Common myeloid progenitor, CD34-positive (primary cell): ENCODE measurements at regions of chr16 and their contacts with region 1.

Region 1: GRCh38 chr16:69754469-69755310 is at the start of gene NOB1:
- DNase-seq: peak; percentile 97 to 99 (median 97)
- H3K4me3 ChIP-seq: peak within 1 kb of the TSS; percentile 70 to 100 (median 99)
- H3K27ac ChIP-seq: peak within 1 kb of the TSS; percentile 69 to 90
- H3K4me1 ChIP-seq: peaks cover 4 to 15% (median 13%) of the 10 kb centered on the region in 4 experiments
- H3K27me3 ChIP-seq: no peaks in the 10 kb centered on the region

Region 2: DNA sequence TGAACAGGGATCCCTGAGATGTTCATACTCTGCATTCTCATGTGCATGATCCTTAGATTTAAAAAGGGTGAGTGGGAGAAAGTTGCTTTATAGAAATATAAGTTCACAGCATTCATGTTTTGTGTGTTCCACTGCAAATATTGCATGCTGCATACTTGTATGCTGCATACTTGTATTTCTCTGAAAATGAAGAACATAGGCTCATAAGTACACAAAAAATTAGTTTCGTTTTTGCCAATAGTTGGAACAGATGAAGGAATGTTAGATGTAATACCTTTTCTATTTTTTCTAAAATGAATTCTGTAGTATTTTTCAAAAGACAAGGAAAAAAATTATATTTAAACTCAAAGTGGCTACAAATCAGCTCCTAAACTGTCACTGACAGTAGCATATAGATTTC is 109.9 kb before region 1 on chr16:
- CTCF ChIA-PET with region 1: no interaction called
- POLR2A ChIA-PET with region 1: no interaction called
- DNase-seq: no peak
- H3K4me3 ChIP-seq: peak overlapping the region in 1 of 7 experiments; percentile 2
- H3K27ac ChIP-seq: no peak overlapping the region
- H3K4me1 ChIP-seq: peaks cover 0 to 5% (median 0%) of the 10 kb centered on the region in 4 experiments
- H3K27me3 ChIP-seq: no peaks in the 10 kb centered on the region

Region 3: DNA sequence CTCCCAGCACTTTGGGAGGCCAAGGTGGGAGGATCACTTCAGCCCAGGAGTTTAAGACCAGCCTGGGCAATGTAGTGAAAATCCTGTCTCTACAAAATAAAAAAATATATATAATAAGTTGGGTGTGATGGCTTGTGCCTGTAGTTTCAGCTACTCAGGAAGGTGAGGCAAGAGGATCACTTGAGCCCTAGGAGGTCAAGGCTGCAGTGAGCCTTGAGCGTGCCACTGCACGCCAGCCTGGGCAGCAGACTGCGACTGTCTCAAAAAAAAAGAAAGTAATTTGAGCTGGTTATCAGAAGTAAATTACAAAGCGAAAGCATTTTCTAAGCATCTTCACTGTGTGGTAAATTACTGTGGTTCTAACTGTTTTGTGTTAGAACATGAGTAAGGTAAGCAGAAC is 94.5 kb before region 1 on chr16:
- CTCF ChIA-PET with region 1: no interaction called
- POLR2A ChIA-PET with region 1: no interaction called
- DNase-seq: no peak
- H3K4me3 ChIP-seq: no peak overlapping the region
- H3K27ac ChIP-seq: no peak overlapping the region
- H3K4me1 ChIP-seq: no peaks in the 10 kb centered on the region
- H3K27me3 ChIP-seq: no peaks in the 10 kb centered on the region

Region 4: DNA sequence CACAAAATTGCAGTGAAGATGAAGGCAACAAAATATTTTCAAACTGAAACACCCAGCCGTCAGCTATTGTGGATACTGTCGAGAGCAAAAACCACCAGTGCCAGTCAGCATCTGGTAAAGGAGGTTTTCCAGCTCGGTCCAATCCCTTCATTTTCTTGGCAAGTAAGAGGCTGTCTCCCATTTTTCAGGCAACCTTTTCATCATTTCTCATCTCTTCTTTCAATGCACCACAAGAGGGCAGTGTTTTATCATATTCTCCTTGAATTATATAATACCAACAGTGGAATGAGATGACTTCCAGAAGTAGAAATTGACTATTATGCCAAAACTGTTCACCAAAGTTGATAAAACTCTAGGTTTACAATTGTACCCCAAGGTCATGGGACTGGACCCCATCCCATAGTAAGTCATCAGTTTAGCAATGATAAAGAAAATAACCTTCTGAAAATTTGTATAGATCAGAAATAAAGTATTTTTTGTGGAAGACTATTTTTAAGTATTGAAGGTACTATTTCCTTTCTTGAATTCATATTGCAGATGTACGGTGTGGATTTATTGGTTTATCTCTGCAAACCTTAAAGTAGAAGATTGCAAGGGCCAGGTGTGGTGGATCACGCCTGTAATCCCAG is 45.1 kb before region 1 on chr16:
- CTCF ChIA-PET with region 1: interaction called, 79 read pairs
- POLR2A ChIA-PET with region 1: no interaction called
- DNase-seq: peak; percentile 64 to 80 (median 78)
- H3K4me3 ChIP-seq: no peak overlapping the region
- H3K27ac ChIP-seq: no peak overlapping the region
- H3K4me1 ChIP-seq: no peaks in the 10 kb centered on the region
- H3K27me3 ChIP-seq: no peaks in the 10 kb centered on the region

Region 5: DNA sequence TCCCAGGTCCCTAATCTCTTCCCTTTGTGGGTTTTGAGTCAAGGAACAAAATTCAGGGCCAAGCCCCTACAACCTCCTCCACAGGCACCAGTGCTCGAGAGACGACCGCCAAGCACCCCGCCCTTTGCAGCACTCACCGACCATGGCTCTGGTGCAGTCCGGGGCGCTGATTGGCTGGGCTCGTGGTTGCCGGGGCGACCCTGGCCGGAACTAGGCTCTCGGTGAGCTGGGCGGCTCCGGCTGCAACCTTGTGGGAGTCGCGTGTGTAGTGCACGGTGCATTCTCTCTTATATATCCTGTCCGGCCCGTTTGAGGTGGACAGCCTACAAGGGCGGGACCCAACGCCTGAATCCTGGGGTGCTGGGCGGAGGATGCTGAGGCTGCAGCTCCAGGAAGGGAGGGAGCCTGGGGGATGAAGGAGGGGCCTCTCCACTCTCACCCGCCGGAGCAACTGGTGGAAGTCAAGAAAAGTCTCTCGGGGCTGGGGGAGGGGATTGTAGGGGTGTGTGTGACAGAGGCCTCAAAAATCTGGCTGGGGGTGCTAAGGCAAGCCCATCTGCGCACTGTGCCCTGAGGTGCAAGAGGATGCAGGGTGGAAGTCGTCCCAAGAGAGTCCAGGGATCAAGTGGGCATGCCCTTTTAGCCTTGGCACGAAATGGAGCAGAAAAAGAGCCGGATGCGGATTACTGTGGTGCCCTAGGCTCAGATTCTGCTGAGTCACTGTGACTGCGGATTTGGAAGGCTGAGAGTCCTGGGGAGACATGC is 28.2 kb before region 1 on chr16 and contains the start of gene NQO1:
- CTCF ChIA-PET with region 1: interaction called, 11 read pairs
- POLR2A ChIA-PET with region 1: interaction called, 5 read pairs
- DNase-seq: peak; percentile 86 to 95 (median 95)
- H3K4me3 ChIP-seq: peak within 1 kb of the TSS; percentile 45 to 91 (median 79)
- H3K27ac ChIP-seq: peak within 1 kb of the TSS; percentile 64 to 88
- H3K4me1 ChIP-seq: peaks cover 4 to 35% (median 15%) of the 10 kb centered on the region in 4 experiments
- H3K27me3 ChIP-seq: no peaks in the 10 kb centered on the region

Region 6: DNA sequence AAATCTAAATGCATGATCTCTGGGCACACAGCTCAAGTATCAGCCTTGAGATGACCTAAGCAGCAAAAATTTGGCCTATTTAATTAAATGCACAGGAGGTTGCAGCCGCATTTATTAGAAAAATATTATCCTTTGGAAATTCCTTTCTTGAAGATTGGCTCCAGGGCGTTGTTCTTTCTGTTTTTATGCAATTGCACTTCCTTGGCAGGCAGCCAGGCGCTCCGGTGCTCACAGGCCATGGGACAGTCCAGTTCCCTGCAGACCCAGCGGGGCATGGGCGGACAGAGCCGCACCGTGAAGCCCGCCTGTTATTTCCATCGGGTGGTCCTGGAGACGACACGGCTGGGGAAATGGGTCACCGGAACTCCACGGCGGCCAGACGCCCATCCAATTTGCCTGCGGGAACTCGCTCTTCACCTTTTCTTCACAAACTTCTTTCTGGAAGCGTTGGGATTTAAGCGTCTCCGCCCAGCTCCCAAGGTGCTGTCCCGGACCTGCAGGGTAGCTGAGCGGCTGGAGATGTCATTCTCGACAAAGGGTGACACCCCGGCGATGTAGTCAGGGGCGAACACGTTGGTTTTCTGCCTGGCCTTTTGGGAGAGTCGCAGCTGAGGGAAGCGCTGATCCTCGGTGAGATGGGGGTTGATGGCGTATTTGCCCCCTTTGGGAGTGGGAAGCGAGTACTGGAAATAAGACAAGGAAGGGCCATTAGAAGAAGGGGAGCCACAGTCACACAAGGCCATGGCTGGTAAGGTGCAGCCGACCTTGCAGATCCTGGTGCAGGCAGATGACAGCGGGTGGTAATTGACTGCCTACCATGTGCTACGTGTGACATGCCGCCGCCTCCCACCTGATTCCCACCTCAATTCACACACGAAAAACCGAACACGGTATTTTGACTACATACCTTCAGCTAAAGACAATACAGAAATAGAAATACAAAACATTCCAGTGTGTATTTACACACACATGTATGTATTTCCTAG is 12.5 kb before region 1 on chr16:
- CTCF ChIA-PET with region 1: interaction called, 12 read pairs
- POLR2A ChIA-PET with region 1: no interaction called
- DNase-seq: no peak
- H3K4me3 ChIP-seq: no peak overlapping the region
- H3K27ac ChIP-seq: no peak overlapping the region
- H3K4me1 ChIP-seq: no peaks in the 10 kb centered on the region
- H3K27me3 ChIP-seq: no peaks in the 10 kb centered on the region